Heart left ventricle (tissue), 16 donors: ENCODE measurements at regions of chr9 and their contacts with region 1.

Region 1: DNA sequence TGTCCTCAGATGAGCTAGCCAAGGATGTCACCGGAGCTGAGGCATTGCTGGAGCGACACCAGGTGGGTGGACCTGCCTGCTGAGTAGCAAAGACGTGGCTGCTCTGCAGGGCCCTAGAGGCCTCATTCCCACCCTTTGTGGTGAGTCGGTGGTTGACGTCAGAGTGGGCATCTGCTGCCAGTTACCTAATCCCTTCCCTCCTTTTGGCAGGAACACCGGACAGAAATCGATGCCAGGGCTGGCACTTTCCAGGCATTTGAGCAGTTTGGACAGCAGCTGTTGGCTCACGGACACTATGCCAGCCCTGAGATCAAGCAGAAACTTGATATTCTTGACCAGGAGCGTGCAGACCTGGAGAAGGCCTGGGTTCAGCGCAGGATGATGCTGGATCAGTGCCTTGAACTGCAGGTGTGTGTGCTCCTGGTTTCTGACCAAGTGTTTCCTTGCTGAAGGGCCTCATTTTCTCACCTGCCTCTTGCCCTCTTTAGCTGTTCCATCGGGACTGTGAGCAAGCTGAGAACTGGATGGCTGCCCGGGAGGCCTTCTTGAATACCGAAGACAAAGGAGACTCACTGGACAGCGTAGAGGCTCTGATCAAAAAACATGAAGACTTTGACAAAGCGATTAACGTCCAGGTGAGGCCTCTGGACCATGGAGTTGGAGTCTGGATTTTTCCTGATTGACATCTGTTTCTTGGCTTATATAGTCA is 48.9 kb downstream of the DYNC2I2 start:
- DNase-seq: peak; percentile 80 to 95 (median 85)
- ATAC-seq: peak; percentile 97 to 98 (median 98)
- H3K4me3 ChIP-seq: no peak overlapping the region
- H3K27ac ChIP-seq: peak overlapping the region in 8 of 12 donors; percentile 13 to 76 (median 54)
- H3K4me1 ChIP-seq: peaks cover 0 to 17% (median 4%) of the 10 kb centered on the region in 12 donors
- H3K27me3 ChIP-seq: no peaks in the 10 kb centered on the region
- CTCF ChIP-seq: peak in 2 of 12 donors; percentile 7 to 13
- POLR2A ChIP-seq: no peak

Region 2: DNA sequence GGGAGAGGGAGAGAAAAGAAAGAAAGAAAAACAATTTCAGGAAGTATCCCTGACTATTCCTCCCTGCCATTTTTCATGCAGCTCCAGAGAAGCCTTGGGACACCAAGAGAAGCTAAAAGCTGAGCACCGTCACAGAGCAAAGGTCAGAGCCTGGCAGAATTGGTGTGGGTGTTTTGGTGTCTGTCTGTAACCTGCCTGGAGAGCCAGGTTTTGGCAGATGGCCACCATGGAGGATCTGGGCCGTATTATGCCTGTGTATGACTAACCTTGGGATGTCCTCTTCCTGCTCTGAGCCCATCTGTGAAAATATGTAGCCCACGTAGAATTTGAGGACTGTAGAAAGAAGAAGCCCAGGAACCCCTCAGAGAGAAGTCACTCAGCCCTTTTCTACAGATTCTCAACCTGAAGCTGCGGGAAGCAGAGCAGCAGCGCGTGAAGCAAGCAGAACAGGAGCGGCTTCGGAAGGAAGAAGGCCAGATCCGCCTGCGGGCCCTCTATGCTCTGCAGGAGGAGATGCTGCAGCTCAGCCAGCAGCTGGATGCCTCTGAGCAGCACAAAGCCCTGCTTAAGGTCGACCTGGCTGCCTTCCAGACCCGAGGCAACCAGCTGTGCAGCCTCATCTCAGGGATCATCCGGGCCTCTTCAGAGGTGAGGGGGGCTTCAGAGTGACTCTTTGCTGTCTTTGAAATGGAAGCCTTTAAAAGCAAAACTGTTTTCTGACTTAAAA is 84.4 kb before region 1 on chr9:
- intact Hi-C with region 1: no loop called
- DNase-seq: peak in 3 of 5 donors; percentile 22 to 57 (median 33)
- ATAC-seq: peak in 3 of 4 donors; percentile 45 to 53 (median 47)
- H3K4me3 ChIP-seq: no peak overlapping the region
- H3K27ac ChIP-seq: peak overlapping the region in 1 of 12 donors; percentile 14
- H3K4me1 ChIP-seq: peaks cover 0 to 9% (median 5%) of the 10 kb centered on the region in 12 donors
- H3K27me3 ChIP-seq: no peaks in the 10 kb centered on the region
- CTCF ChIP-seq: no peak
- POLR2A ChIP-seq: no peak

Region 3: DNA sequence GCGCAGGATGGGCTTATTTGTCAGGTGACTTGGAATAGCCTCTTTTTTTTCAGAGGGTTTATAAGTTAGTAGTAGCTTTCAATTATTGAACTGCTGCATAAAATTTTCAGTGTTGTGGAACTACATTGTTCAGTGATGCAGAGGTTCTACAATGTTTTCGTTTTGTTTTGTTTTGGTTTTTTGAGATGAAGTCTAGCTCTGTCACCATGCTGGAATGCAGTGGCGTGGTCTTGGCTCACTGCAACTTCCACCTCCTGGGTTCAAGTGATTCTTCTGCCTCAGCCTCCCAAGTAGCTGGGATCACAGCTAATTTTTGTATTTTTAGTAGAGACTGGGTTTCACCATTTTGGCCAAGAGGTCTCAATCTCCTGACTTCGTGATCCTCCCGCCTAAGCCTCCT is 361.7 kb after region 1 on chr9:
- intact Hi-C with region 1: loop called in 1 of 10 experiments (anchors 10 kb)
- DNase-seq: no peak
- ATAC-seq: no peak
- H3K4me3 ChIP-seq: no peak overlapping the region
- H3K27ac ChIP-seq: no peak overlapping the region
- H3K4me1 ChIP-seq: no peaks in the 10 kb centered on the region
- H3K27me3 ChIP-seq: no peaks in the 10 kb centered on the region
- CTCF ChIP-seq: no peak
- POLR2A ChIP-seq: no peak